ENCODE measurements at regions of chr15 and their contacts with region 1.

Region 1: GRCh38 chr15:98724048-98724447 is 75.7 kb downstream of the IGF1R start:
- DNase-seq: no peak
- H3K4me3 Mint-ChIP-seq: no peak overlapping the region
- H3K27ac Mint-ChIP-seq: no peak overlapping the region
- H3K4me1 Mint-ChIP-seq: peaks cover 29% of the 10 kb centered on the region
- H3K27me3 Mint-ChIP-seq: no peaks in the 10 kb centered on the region

Region 2: DNA sequence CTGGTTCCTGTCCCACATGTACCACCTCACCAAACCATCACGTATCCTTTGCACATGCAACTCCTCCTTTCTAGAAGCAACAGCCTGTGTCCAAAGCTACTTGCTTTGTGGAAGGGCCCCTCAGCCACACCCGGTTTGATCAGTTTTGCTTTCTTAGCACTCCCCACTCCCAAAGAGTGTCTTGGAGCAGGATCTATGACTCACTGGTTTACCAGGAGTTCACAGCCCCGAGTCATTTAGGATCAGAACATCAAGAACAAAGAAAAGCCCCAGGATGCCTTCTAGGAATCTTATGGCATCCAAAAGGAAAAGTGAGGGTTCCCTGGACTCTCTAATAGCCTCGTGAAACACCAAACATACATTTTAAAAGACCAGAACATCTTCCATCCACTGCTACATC is 126.4 kb before region 1 on chr15:
- CTCF ChIA-PET with region 1: no interaction called
- POLR2A ChIA-PET with region 1: no interaction called
- intact Hi-C with region 1: no loop called
- DNase-seq: no peak
- H3K4me3 Mint-ChIP-seq: no peak overlapping the region
- H3K27ac Mint-ChIP-seq: no peak overlapping the region
- H3K4me1 Mint-ChIP-seq: peaks cover 13% of the 10 kb centered on the region
- H3K27me3 Mint-ChIP-seq: peaks cover 2% of the 10 kb centered on the region

Region 3: DNA sequence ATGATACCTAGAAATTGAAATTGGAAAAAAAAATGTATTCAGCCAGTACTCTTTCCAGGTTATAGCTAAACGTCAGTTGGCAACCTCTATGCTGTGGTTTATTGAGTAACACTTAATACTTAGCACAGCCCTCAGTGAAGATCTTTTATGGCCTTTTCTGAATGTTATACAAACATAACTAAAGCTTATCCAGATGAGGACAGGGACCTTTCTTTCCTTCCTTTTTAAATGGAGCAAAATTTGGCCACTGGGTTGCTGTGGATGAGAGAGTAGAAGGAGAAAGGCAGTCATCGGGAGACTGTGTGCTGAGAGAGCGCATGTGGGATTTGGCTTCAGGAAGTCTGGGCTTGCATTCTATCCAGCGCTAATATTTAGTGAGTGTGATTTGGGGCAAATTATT is 39.6 kb before region 1 on chr15:
- CTCF ChIA-PET with region 1: interaction called, 4 read pairs
- POLR2A ChIA-PET with region 1: no interaction called
- intact Hi-C with region 1: loop called (anchors 2 kb)
- DNase-seq: no peak
- H3K4me3 Mint-ChIP-seq: no peak overlapping the region
- H3K27ac Mint-ChIP-seq: no peak overlapping the region
- H3K4me1 Mint-ChIP-seq: peaks cover 38% of the 10 kb centered on the region
- H3K27me3 Mint-ChIP-seq: no peaks in the 10 kb centered on the region

Measured in activated CD4-positive, alpha-beta memory T cell treated with anti-CD3 and anti-CD28 coated beads for 36 hours (primary cell).